Left cardiac atrium (tissue), 4 donors: ENCODE measurements at regions of chr9 and their contacts with region 1.

Region 1: GRCh38 chr9:128917151-128917849 is 3.5 kb upstream of the PHYHD1 start:
- DNase-seq: peak; percentile 88
- ATAC-seq: peak; percentile 47 to 61

Region 2: DNA sequence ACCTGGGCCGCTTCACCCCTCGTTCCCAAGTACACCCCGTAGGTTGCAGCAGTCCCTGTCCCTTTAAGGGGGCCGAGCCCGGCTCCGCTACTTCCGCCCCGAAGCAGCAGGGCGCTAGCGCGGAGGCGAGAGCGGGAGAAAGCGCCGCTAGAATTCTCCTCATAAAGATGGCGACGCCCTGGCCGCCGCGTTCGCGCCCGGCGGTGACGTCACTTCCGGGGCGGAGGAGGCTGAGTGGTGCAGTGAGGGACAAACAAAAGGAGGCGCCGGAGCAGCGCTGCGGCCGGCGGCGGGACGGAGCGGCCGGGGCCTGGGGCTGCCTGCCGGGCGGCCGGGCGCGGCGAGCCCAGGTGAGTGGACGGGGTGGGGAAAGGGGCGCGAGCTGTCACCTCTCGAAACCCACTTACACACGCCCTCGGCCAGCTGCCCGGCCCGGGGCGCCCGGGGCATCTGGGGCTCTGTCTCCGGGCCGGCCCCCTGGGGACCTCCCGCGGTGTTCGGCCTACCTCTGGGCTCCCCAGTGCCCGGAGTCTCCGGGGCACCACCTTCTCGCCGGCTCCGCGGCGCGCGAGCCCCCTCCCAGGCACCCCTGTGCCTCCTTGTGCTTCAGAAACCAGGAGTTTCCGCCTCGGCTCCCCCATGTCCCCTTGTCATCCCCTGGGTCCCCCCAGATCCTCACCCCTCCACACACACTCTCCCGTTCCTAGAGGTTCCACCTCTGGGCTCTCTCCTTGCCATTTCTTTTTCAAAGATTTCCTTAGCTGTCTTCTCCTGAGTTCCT is 35.2 kb before region 1 on chr9 and contains the starts of genes KYAT1 and LRRC8A:
- intact Hi-C with region 1: loop called in 1 of 2 experiments (anchors 5 kb)
- DNase-seq: peak; percentile 98
- ATAC-seq: peak; percentile 92 to 94
- total RNA-seq, gene KYAT1: 10.4 to 10.8 TPM
- total RNA-seq, gene LRRC8A: 23.7 to 47.8 TPM

Region 3: GRCh38 chr9:128986671-128987070 is 69.4 kb after region 1 on chr9:
- intact Hi-C with region 1: no loop called
- DNase-seq: no peak
- ATAC-seq: no peak